Activated T-helper 1 cell treated with anti-CD3 and anti-CD28 coated beads, Interleukin-12 subunit alpha, Interleukin-12 subunit beta, Interleukin-2, Interleukin-4 antibody, amounts not matched to agents 30 ng/mL and 10 ng/mL and 1 ng/mL, durations not matched to agents 14 hours and 24 hours and 36 hours (primary cell): ENCODE measurements at regions of chr2 and their contacts with region 1.

Region 1: GRCh38 chr2:147297820-147298219 is 547.0 kb upstream of the ACVR2A start:
- DNase-seq: peak; percentile 49
- H3K4me3 Mint-ChIP-seq: peak overlapping the region; percentile 36
- H3K27ac Mint-ChIP-seq: peak overlapping the region; percentile 89
- H3K4me1 Mint-ChIP-seq: peaks cover 72% of the 10 kb centered on the region
- H3K27me3 Mint-ChIP-seq: no peaks in the 10 kb centered on the region

Region 2: GRCh38 chr2:147331790-147332419 is 34.1 kb after region 1 on chr2:
- intact Hi-C with region 1: loop called (anchors 1 kb)
- DNase-seq: peak; percentile 11
- H3K4me3 Mint-ChIP-seq: no peak overlapping the region
- H3K27ac Mint-ChIP-seq: no peak overlapping the region
- H3K4me1 Mint-ChIP-seq: peaks cover 33% of the 10 kb centered on the region
- H3K27me3 Mint-ChIP-seq: peaks cover 6% of the 10 kb centered on the region

Region 3: GRCh38 chr2:147499785-147500184 is 202.0 kb after region 1 on chr2:
- intact Hi-C with region 1: loop called (anchors 5 kb)
- DNase-seq: no peak
- H3K4me3 Mint-ChIP-seq: peak overlapping the region; percentile 63
- H3K27ac Mint-ChIP-seq: peak overlapping the region; percentile 86
- H3K4me1 Mint-ChIP-seq: peaks cover 62% of the 10 kb centered on the region
- H3K27me3 Mint-ChIP-seq: no peaks in the 10 kb centered on the region

Region 4: GRCh38 chr2:147636238-147636882 is 338.5 kb after region 1 on chr2:
- intact Hi-C with region 1: loop called (anchors 2 kb)
- DNase-seq: no peak
- H3K4me3 Mint-ChIP-seq: no peak overlapping the region
- H3K27ac Mint-ChIP-seq: no peak overlapping the region
- H3K4me1 Mint-ChIP-seq: peaks cover 21% of the 10 kb centered on the region
- H3K27me3 Mint-ChIP-seq: no peaks in the 10 kb centered on the region